Common myeloid progenitor, CD34-positive (primary cell): ENCODE measurements at regions of chr1 and their contacts with region 1.

Region 1: DNA sequence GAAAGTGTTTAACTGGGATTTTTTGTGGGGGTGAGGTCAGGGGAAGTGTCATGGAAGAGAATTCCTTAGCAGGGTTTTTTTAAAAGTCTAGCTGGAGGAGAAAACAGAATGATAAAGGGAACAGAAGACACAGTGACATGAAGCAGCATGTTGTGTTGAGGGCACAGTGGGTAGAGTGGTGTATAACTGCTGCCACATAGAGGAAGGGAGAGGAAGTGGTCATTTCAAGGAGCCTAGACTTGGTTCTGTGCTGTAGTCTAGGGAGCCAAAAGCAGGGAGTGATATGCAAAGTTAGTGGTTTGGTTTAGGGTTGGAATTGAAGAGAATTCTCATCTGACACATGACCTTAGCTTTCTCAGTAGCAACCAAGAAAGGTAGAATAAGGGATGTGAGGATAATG is 10.2 kb downstream of the EEIG2 start:
- DNase-seq: peak in 2 of 3 donors; percentile 76 to 81
- H3K4me3 ChIP-seq: no peak overlapping the region
- H3K27ac ChIP-seq: no peak overlapping the region
- H3K4me1 ChIP-seq: peaks cover 3 to 20% (median 7%) of the 10 kb centered on the region in 4 experiments
- H3K27me3 ChIP-seq: no peaks in the 10 kb centered on the region

Region 2: GRCh38 chr1:108584348-108584856 is 14.3 kb after region 1 on chr1:
- CTCF ChIA-PET with region 1: interaction called, 14 read pairs
- POLR2A ChIA-PET with region 1: no interaction called
- DNase-seq: peak in 2 of 3 donors; percentile 45 to 71
- H3K4me3 ChIP-seq: peak overlapping the region in 1 of 7 experiments; percentile 24
- H3K27ac ChIP-seq: no peak overlapping the region
- H3K4me1 ChIP-seq: peaks cover 17 to 30% (median 18%) of the 10 kb centered on the region in 4 experiments
- H3K27me3 ChIP-seq: no peaks in the 10 kb centered on the region

Region 3: GRCh38 chr1:108801101-108801500 is 231.0 kb after region 1 on chr1:
- CTCF ChIA-PET with region 1: no interaction called
- POLR2A ChIA-PET with region 1: no interaction called
- DNase-seq: no peak
- H3K4me3 ChIP-seq: no peak overlapping the region
- H3K27ac ChIP-seq: no peak overlapping the region
- H3K4me1 ChIP-seq: no peaks in the 10 kb centered on the region
- H3K27me3 ChIP-seq: no peaks in the 10 kb centered on the region